Heart right ventricle (tissue), 16 donors: ENCODE measurements at regions of chr7 and their contacts with region 1.

Region 1: DNA sequence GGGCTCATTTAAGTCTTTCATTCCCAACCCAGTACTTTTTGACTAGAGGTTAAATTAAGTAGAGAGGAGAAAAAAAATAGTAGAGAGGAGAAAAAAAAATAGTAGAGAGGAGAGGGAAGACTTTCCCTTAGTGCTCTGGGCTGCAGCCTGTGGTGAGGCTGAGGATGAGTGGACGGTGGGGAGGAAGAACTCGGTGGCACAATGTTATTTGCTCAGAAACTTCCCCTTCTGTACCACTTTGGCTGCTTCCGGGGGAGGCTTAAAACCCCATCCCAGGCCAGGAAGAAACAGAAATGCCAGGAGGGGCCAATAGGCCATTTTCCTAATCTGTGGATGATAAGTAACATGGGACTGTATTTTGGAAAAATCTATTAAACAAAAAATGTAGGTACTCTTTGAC is 14.6 kb upstream of the MLXIPL start:
- DNase-seq: no peak
- ATAC-seq: no peak
- H3K4me3 ChIP-seq: no peak overlapping the region
- H3K27ac ChIP-seq: no peak overlapping the region
- H3K4me1 ChIP-seq: peaks cover 0 to 10% (median 0%) of the 10 kb centered on the region in 9 donors
- H3K27me3 ChIP-seq: peaks cover 0 to 39% (median 26%) of the 10 kb centered on the region in 7 donors
- CTCF ChIP-seq: no peak

Region 2: GRCh38 chr7:73593207-73594045 is 45.5 kb before region 1 on chr7:
- intact Hi-C with region 1: loop called in 1 of 10 experiments (anchors 2 kb)
- DNase-seq: no peak
- ATAC-seq: peak in 3 of 8 donors; percentile 24 to 43 (median 26)
- H3K4me3 ChIP-seq: no peak overlapping the region
- H3K27ac ChIP-seq: no peak overlapping the region
- H3K4me1 ChIP-seq: no peaks in the 10 kb centered on the region
- H3K27me3 ChIP-seq: peaks cover 0 to 30% (median 10%) of the 10 kb centered on the region in 7 donors
- CTCF ChIP-seq: no peak

Region 3: DNA sequence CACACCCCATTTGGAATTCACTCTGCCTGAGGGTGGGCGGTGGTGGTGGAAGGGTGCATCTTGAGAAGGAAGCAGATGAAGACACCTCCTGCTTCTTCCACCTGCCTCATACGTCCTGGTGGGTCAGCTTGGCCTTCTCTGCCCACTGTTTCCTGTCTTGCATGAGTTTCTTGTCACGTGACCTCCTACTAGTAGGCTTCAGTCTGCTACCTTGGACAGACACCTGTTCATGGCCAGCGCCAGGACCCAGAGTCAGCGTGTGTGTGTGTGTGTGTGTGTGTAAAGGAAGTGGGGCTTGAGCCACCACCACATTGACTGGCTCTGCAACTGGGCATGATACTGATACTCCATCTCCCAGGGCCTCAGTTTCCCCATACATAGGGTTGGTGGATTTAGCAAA is 11.6 kb after region 1 on chr7:
- intact Hi-C with region 1: loop called in 1 of 10 experiments (anchors 2 kb)
- DNase-seq: no peak
- ATAC-seq: no peak
- H3K4me3 ChIP-seq: no peak overlapping the region
- H3K27ac ChIP-seq: no peak overlapping the region
- H3K4me1 ChIP-seq: peaks cover 0 to 8% (median 5%) of the 10 kb centered on the region in 9 donors
- H3K27me3 ChIP-seq: peaks cover 5 to 75% (median 57%) of the 10 kb centered on the region in 7 donors
- CTCF ChIP-seq: no peak